Activated naive CD4-positive, alpha-beta T cell treated with anti-CD3 and anti-CD28 coated beads for 36 hours (primary cell): ENCODE measurements at regions of chr13 and their contacts with region 1.

Region 1: DNA sequence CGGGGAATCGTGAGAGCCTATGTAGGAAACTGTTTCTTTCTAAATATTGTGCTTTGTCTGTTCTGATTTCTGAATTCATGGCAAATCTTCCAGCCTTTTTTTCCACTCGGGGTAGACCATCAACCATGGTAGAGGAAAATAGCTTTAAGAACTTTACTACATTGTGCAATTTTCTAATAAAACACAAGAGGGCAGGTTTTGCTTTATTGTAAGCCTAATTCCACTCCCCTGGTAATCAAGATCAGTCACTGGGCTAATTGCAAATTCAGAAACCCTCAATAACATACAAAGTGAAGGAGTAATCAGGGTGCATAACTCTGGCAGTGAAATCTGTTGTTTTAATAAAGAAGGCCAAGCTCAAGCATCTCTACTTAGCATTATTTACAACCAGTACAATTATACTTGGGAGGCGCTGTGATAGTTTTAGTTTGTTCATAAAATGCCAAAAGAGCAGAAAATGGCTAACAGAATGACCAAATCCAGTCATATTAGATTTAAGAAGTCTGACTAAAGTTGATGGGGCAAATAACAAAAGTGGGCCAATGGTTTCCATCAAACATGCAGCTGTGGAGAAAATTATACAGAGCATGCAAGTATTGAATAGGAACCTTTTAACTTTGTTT is 43.8 kb downstream of the DCT start:
- DNase-seq: no peak
- H3K4me3 Mint-ChIP-seq: no peak overlapping the region
- H3K27ac Mint-ChIP-seq: no peak overlapping the region
- H3K4me1 Mint-ChIP-seq: peaks cover 28% of the 10 kb centered on the region
- H3K27me3 Mint-ChIP-seq: no peaks in the 10 kb centered on the region

Region 2: GRCh38 chr13:92668157-92668556 is 1767.6 kb before region 1 on chr13:
- CTCF ChIA-PET with region 1: no interaction called
- intact Hi-C with region 1: no loop called
- DNase-seq: no peak
- H3K4me3 Mint-ChIP-seq: no peak overlapping the region
- H3K27ac Mint-ChIP-seq: no peak overlapping the region
- H3K4me1 Mint-ChIP-seq: no peaks in the 10 kb centered on the region
- H3K27me3 Mint-ChIP-seq: no peaks in the 10 kb centered on the region

Region 3: GRCh38 chr13:94549232-94550061 is 113.7 kb after region 1 on chr13:
- CTCF ChIA-PET with region 1: interaction called, 3 read pairs
- intact Hi-C with region 1: loop called (anchors 1 kb)
- DNase-seq: peak; percentile 93
- H3K4me3 Mint-ChIP-seq: peak overlapping the region; percentile 75
- H3K27ac Mint-ChIP-seq: peak overlapping the region; percentile 88
- H3K4me1 Mint-ChIP-seq: peaks cover 5% of the 10 kb centered on the region
- H3K27me3 Mint-ChIP-seq: peaks cover 3% of the 10 kb centered on the region

Region 4: GRCh38 chr13:94613051-94613450 is 177.3 kb after region 1 on chr13:
- CTCF ChIA-PET with region 1: interaction called, 141 read pairs
- intact Hi-C with region 1: loop called (anchors 1 kb)
- DNase-seq: no peak
- H3K4me3 Mint-ChIP-seq: no peak overlapping the region
- H3K27ac Mint-ChIP-seq: no peak overlapping the region
- H3K4me1 Mint-ChIP-seq: peaks cover 22% of the 10 kb centered on the region
- H3K27me3 Mint-ChIP-seq: no peaks in the 10 kb centered on the region

Region 5: DNA sequence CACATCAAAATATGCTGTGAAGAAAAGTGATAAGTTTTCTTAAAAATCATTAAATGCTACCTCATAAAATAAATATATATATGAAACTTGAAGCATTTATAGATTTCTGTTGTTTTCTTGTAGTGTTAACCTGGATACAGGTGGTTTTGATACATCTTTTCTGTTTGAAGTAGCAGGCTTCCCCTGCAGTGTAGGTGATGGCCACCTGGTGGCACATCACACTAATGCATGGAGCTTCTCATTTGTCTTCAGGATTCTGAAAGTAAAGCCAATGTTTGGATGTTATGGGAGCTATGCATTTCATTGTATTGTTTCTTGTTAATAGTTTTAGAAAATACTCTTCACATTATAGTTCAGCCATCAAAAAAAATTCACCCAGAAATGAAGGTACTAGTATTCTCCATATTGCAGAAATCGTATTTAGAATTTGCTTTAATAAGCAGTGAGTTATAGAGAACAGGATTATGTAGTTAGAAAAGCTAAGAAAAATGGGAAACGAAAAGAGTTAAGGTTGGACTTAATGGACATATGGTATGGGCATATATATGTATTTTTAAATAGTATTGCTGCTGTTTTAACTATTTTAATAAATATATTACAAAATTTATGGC is 184.7 kb after region 1 on chr13:
- CTCF ChIA-PET with region 1: interaction called, 141 read pairs
- intact Hi-C with region 1: loop called (anchors 1 kb)
- DNase-seq: peak; percentile 41
- H3K4me3 Mint-ChIP-seq: no peak overlapping the region
- H3K27ac Mint-ChIP-seq: no peak overlapping the region
- H3K4me1 Mint-ChIP-seq: peaks cover 7% of the 10 kb centered on the region
- H3K27me3 Mint-ChIP-seq: no peaks in the 10 kb centered on the region

Region 6: GRCh38 chr13:94667190-94667589 is 231.5 kb after region 1 on chr13:
- CTCF ChIA-PET with region 1: no interaction called
- intact Hi-C with region 1: loop called (anchors 5 kb)
- DNase-seq: peak; percentile 32
- H3K4me3 Mint-ChIP-seq: no peak overlapping the region
- H3K27ac Mint-ChIP-seq: peak overlapping the region; percentile 82
- H3K4me1 Mint-ChIP-seq: peaks cover 35% of the 10 kb centered on the region
- H3K27me3 Mint-ChIP-seq: peaks cover 9% of the 10 kb centered on the region

Region 7: DNA sequence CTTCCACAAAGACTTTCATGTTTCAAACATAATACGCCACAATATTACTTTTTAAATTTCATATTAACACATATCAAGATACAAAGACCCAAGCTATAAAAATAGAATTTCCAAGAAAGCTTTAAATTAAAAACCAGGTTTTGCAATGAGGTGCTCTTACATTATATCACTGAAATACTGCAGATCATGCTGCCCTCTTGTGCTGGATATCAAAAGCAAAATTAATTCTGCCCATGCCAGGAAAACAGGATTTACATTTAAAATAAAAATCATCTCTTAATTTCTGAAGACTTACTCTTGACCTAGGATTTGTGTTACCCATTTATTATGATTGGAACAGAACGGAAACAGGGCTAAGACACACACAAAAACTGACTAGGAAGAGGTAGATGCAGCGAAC is 720.5 kb after region 1 on chr13:
- CTCF ChIA-PET with region 1: no interaction called
- intact Hi-C with region 1: loop called (anchors 5 kb)
- DNase-seq: no peak
- H3K4me3 Mint-ChIP-seq: no peak overlapping the region
- H3K27ac Mint-ChIP-seq: no peak overlapping the region
- H3K4me1 Mint-ChIP-seq: peaks cover 5% of the 10 kb centered on the region
- H3K27me3 Mint-ChIP-seq: no peaks in the 10 kb centered on the region

Region 8: GRCh38 chr13:95480131-95480545 is 1044.4 kb after region 1 on chr13:
- CTCF ChIA-PET with region 1: no interaction called
- intact Hi-C with region 1: loop called (anchors 5 kb)
- DNase-seq: peak; percentile 27
- H3K4me3 Mint-ChIP-seq: no peak overlapping the region
- H3K27ac Mint-ChIP-seq: no peak overlapping the region
- H3K4me1 Mint-ChIP-seq: peaks cover 10% of the 10 kb centered on the region
- H3K27me3 Mint-ChIP-seq: peaks cover 3% of the 10 kb centered on the region